Endothelial cell of umbilical vein (primary cell): ENCODE measurements at regions of chr1 and their contacts with region 1.

Region 1: GRCh38 chr1:63537940-63538339 is 14.6 kb downstream of the EFCAB7 start:
- DNase-seq: peak; percentile 24
- H3K4me3 ChIP-seq: no peak overlapping the region
- H3K27ac ChIP-seq: no peak overlapping the region
- H3K4me1 ChIP-seq: no peaks in the 10 kb centered on the region
- H3K27me3 ChIP-seq: no peaks in the 10 kb centered on the region
- CTCF ChIP-seq: peak; percentile 12 to 20
- POLR2A ChIP-seq: no peak

Region 2: GRCh38 chr1:62912028-62912638 is 625.8 kb before region 1 on chr1:
- CTCF ChIA-PET with region 1: interaction called, 5 read pairs
- POLR2A ChIA-PET with region 1: no interaction called
- dilution Hi-C with region 1: no loop called
- intact Hi-C with region 1: loop called (anchors 5 kb)
- DNase-seq: peak; percentile 39
- H3K4me3 ChIP-seq: no peak overlapping the region
- H3K27ac ChIP-seq: no peak overlapping the region
- H3K4me1 ChIP-seq: no peaks in the 10 kb centered on the region
- H3K27me3 ChIP-seq: peaks cover 1 to 10% of the 10 kb centered on the region in 2 experiments
- CTCF ChIP-seq: peak; percentile 61 to 67
- POLR2A ChIP-seq: no peak

Region 3: DNA sequence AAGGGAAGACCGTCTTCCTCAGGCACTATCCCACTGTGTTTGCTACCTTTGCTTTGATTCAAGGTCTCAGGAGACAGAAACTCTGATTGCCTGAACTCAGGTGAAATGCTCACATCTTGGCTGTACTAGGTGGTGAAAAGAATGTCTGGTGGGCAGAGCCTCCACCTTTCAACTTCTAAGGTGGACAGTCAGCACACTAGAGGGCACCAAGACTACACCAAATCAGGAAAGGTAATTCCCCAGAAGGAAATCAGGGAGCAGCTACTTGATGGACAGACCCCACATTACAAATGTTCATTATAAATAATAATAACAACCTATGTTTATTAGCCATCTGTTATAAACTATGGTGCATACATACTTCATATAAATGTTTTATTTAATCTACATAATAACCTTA is 533.1 kb before region 1 on chr1:
- CTCF ChIA-PET with region 1: interaction called, 11 read pairs
- POLR2A ChIA-PET with region 1: no interaction called
- dilution Hi-C with region 1: no loop called
- intact Hi-C with region 1: no loop called
- DNase-seq: no peak
- H3K4me3 ChIP-seq: no peak overlapping the region
- H3K27ac ChIP-seq: no peak overlapping the region
- H3K4me1 ChIP-seq: no peaks in the 10 kb centered on the region
- H3K27me3 ChIP-seq: peaks cover 0 to 5% of the 10 kb centered on the region in 2 experiments
- CTCF ChIP-seq: no peak
- POLR2A ChIP-seq: no peak

Region 4: DNA sequence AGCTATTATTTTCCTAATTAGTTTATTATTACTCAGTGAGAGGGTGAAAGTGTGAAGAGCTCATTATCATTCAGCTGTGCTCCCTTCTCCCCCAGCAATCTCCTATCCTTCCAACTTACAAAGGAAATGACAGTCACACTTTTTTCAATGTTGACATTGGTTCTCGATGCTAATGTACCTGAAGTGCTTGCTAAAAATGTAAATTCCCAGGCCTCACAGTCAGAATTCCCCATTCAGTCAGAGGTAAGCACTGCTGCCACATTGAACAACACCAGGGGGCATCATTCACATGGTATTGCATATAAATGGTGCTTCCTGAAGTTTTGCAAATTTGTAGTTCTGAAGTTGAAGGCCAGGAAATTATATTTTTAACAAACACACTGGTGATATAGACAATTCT is 348.3 kb before region 1 on chr1:
- CTCF ChIA-PET with region 1: interaction called, 24 read pairs
- POLR2A ChIA-PET with region 1: no interaction called
- dilution Hi-C with region 1: no loop called
- intact Hi-C with region 1: no loop called
- DNase-seq: no peak
- H3K4me3 ChIP-seq: no peak overlapping the region
- H3K27ac ChIP-seq: no peak overlapping the region
- H3K4me1 ChIP-seq: no peaks in the 10 kb centered on the region
- H3K27me3 ChIP-seq: peaks cover 0 to 3% of the 10 kb centered on the region in 2 experiments
- CTCF ChIP-seq: no peak
- POLR2A ChIP-seq: no peak

Region 5: GRCh38 chr1:63199696-63200335 is 338.1 kb before region 1 on chr1:
- CTCF ChIA-PET with region 1: no interaction called
- POLR2A ChIA-PET with region 1: no interaction called
- dilution Hi-C with region 1: no loop called
- intact Hi-C with region 1: no loop called
- DNase-seq: no peak
- H3K4me3 ChIP-seq: no peak overlapping the region
- H3K27ac ChIP-seq: no peak overlapping the region
- H3K4me1 ChIP-seq: no peaks in the 10 kb centered on the region
- H3K27me3 ChIP-seq: peaks cover 7 to 26% of the 10 kb centered on the region in 2 experiments
- CTCF ChIP-seq: no peak
- POLR2A ChIP-seq: no peak

Region 6: GRCh38 chr1:63327417-63328139 is 210.4 kb before region 1 on chr1:
- CTCF ChIA-PET with region 1: interaction called, 43 read pairs
- POLR2A ChIA-PET with region 1: no interaction called
- dilution Hi-C with region 1: no loop called
- intact Hi-C with region 1: loop called (anchors 1 kb)
- DNase-seq: peak; percentile 57
- H3K4me3 ChIP-seq: no peak overlapping the region
- H3K27ac ChIP-seq: no peak overlapping the region
- H3K4me1 ChIP-seq: no peaks in the 10 kb centered on the region
- H3K27me3 ChIP-seq: peaks cover 74 to 100% of the 10 kb centered on the region in 2 experiments
- CTCF ChIP-seq: peak; percentile 82 to 90
- POLR2A ChIP-seq: no peak

Region 7: GRCh38 chr1:63522891-63523728 is 14.8 kb before region 1 on chr1 and contains the starts of genes EFCAB7 and ITGB3BP:
- CTCF ChIA-PET with region 1: interaction called, 32 read pairs
- POLR2A ChIA-PET with region 1: no interaction called
- dilution Hi-C with region 1: no loop called
- intact Hi-C with region 1: no loop called
- DNase-seq: peak; percentile 91
- H3K4me3 ChIP-seq: peak within 1 kb of the TSS; percentile 55 to 95 (median 75)
- H3K27ac ChIP-seq: peak within 1 kb of the TSS; percentile 82
- H3K4me1 ChIP-seq: peaks cover 13% of the 10 kb centered on the region
- H3K27me3 ChIP-seq: no peaks in the 10 kb centered on the region
- CTCF ChIP-seq: no peak
- POLR2A ChIP-seq: peak; percentile 72
- total RNA-seq, gene EFCAB7: 6.1 and 7.1 TPM in 2 replicates
- total RNA-seq, gene ITGB3BP: 24.4 and 26.6 TPM in 2 replicates